ENCODE measurements at regions of chr22 and their contacts with region 1.

Region 1: GRCh38 chr22:30079952-30080533 is at the start of gene HORMAD2:
- DNase-seq: peak; percentile 8 to 77 (median 48)

Region 2: DNA sequence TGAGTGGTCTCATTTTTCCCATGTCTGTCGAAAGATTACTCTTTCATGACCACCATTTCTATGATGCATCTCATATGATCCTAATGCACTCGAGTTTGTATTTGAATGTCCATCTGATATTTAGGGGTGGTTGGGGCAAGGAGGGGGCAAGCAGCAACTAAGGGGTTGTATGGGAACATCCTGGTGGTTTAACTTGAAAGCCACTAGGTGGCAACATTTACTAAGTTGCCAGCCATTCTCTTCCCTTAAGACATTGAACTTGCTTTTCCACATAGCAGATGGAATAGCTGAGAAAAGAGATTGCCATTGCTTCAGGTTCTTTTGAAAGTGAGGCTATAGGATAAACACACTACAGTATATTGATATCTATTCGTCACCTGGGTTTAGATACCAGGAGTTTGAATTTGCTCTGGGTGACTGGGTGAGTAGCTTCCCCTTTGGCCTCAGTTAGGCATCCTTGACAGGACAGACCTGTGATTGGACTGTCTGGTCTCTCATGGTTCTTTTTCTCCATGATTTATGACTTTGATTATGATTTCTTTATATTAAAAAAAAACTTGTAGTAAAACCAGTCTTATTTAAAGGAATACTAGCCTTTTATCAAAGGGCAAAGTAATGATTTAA is 444.2 kb before region 1 on chr22:
- intact Hi-C with region 1: loop called (anchors 10 kb)
- DNase-seq: peak in 12 of 42 donors; percentile 12 to 64 (median 30)

Region 3: DNA sequence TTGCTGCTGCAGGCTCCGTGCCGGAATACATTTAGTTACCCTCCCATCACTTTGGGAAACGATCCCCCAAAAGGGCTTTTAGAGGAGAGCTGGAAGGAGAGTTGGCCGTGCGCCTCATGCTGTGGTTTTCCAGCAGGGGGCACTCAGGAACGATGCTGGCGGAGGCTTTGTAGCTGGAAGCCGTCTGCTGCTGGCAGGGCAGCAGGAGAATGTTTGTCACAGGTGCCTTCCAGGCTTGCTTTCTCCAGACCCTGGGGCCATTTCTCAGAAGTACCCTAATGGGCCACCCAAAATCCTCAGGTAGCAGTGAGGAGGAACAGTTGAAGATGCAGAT is 390.2 kb before region 1 on chr22:
- intact Hi-C with region 1: loop called (anchors 10 kb)
- DNase-seq: peak; percentile 69 to 92 (median 85)

Region 4: DNA sequence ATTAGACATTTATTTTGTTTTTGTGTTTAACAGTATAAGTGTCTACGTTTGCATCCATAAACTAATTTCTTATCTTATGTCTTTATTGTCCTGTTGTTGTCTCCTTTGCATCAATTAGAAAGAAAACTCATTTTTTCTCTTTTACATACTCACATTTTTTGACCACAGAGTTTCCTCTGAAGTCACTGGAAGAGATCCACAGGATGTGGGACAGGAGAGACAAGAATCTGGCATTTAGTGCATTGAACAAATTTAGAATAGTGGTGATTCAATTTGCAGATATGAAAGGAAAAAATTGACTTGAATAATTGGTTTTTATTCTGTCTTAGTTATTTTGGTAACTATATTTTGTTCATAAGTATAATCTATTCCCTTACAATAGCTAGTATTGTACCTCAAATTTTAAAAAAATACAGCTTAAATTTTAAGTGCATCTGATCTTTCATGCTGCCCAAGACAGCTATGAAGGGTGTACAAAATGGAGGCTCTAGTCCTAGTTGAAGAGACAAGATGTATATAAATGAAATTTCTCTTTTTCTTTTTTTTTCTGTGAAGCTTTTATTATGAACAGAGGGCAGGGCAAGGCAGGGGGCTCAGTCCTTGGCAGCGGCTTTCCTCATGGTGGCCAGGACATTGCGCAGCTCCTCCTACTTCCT is 24.6 kb after region 1 on chr22:
- intact Hi-C with region 1: no loop called
- DNase-seq: no peak

Region 5: DNA sequence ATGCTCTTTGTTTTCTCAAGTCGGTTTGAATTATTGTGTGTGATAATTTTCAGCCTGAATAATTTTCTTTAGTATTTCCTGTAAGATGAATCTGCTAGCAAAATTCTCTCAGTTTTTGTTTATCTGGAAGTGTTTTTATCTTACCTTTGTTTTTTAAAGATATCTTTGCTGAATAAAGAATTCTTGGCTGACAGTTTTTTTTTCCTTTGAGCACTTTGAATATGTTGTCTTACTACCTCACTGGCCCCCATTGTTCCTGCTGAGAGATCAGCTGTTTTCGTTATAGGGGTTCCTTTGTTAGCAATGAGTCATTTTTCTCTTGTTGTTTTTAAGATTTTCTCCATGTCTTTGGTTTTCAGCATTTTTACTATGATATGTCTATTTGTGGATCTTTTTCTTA is 63.2 kb after region 1 on chr22:
- intact Hi-C with region 1: no loop called
- DNase-seq: no peak

Region 6: GRCh38 chr22:30277547-30278344 is 197.7 kb after region 1 on chr22:
- intact Hi-C with region 1: no loop called
- DNase-seq: peak in 10 of 42 donors; percentile 9 to 64 (median 34)

Measured in head of caudate nucleus (tissue), 42 donors.